ENCODE measurements at regions of chr14 and their contacts with region 1.

Region 1: DNA sequence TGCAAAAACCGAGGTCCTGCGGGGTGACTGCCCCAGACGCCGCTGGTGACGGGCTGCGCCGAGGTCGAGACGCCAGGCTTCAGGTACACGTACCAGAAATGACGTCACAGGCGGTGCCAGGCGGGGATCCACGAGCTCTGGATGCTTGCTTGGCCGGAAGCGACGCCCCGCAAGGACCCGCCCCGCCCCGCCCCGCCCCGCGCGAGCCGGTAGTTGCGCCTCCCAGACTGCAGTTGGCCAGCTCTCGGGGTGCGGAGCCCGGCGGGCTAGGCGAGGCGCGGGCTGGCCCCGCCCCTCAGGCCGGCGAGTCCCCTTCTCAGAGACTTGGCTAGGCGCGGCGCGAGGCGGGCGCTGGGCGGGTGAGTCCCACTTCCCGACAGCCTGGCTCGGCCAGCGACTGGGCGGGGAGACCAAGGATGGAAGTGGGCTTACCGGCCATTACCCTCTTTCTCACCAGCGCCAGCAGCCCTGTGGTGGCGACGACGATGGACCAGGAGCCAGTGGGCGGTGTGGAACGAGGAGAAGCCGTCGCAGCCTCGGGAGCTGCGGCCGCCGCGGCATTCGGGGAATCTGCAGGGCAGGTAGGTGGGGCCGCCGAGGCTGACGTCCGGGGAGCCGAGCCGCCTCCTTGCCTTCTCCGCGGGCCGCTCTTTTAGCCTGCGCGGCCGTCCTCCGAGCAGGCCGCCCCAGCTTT is at the start of gene FAM177A1:
- DNase-seq: peak; percentile 98
- ATAC-seq: peak; percentile 98
- H3K4me3 Mint-ChIP-seq: peak within 1 kb of the TSS; percentile 89
- H3K27ac Mint-ChIP-seq: peak within 1 kb of the TSS; percentile 98
- H3K4me1 Mint-ChIP-seq: peaks cover 20% of the 10 kb centered on the region
- H3K27me3 Mint-ChIP-seq: no peaks in the 10 kb centered on the region; the same call in 1 of the 2 replicates
- CTCF ChIP-seq: no peak
- total RNA-seq, gene FAM177A1: 36.8 to 44.7 TPM (median 44.3 TPM) in 3 replicates

Region 2: GRCh38 chr14:35121887-35122695 is 75.9 kb after region 1 on chr14 and contains the starts of genes PPP2R3C and PRORP:
- CTCF ChIA-PET with region 1: no interaction called
- POLR2A ChIA-PET with region 1: interaction called, 15 read pairs
- DNase-seq: peak; percentile 92
- ATAC-seq: peak; percentile 91
- H3K4me3 Mint-ChIP-seq: peak within 1 kb of the TSS; percentile 98
- H3K27ac Mint-ChIP-seq: peak within 1 kb of the TSS; percentile 100
- H3K4me1 Mint-ChIP-seq: peaks cover 14% of the 10 kb centered on the region
- H3K27me3 Mint-ChIP-seq: no peaks in the 10 kb centered on the region
- CTCF ChIP-seq: no peak
- total RNA-seq, gene PPP2R3C: 31.2 to 33.8 TPM (median 31.6 TPM) in 3 replicates
- total RNA-seq, gene PRORP: 33.6 to 44.1 TPM (median 36.7 TPM) in 3 replicates